ENCODE measurements at regions of chr9 and their contacts with region 1.

Region 1: GRCh38 chr9:126500684-126501382 is 112.9 kb upstream of the LMX1B start:
- DNase-seq: peak; percentile 95
- H3K4me3 ChIP-seq: peak overlapping the region in 1 of 2 experiments; percentile 54; a peak in 1 of 4 replicates
- H3K27ac ChIP-seq: no peak overlapping the region; a peak in 1 of 4 replicates
- H3K4me1 ChIP-seq: peaks cover 0 to 26% of the 10 kb centered on the region in 2 experiments; a peak in 1 of 4 replicates
- H3K27me3 ChIP-seq: no peaks in the 10 kb centered on the region
- CTCF ChIP-seq: peak; percentile 86
- EP300 ChIP-seq: no peak
- RAD21 ChIP-seq: peak; percentile 99

Region 2: DNA sequence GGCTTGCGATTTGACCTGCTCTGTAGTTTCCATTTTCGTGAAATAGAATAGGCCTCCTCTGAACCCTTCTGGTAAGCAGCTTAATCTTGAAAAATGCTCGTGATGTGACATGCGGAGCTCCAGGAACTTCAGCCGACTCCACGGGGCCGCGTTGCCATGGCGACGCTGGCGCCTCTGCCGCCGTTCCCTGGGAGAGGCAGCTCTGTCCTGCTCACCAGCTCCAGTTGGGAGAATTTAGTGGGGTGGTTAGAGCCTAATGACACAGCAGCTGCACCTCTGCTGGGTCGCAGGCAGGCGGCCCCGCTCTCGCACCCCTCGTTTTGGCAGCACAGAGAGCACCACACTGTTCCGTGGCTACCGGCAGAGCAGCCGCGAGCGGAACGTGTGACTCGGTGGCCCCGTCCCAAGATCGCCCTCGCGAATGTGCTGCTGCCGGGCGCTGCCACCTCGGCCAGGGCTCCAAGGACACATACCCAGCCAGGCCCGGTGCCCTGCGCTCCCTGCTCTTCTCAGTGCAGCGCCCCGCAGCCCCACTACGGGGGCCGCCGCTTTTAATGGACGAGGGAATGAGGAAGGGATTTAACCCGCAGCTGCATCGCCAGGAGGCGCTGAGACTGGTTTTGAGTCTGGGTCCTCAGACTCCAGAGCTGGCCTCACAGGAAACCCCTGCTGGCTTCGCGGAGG is 18.3 kb before region 1 on chr9:
- CTCF ChIA-PET with region 1: interaction called, 12 read pairs
- POLR2A ChIA-PET with region 1: no interaction called
- DNase-seq: no peak
- H3K4me3 ChIP-seq: no peak overlapping the region
- H3K27ac ChIP-seq: no peak overlapping the region
- H3K4me1 ChIP-seq: no peaks in the 10 kb centered on the region
- H3K27me3 ChIP-seq: no peaks in the 10 kb centered on the region
- CTCF ChIP-seq: no peak
- EP300 ChIP-seq: no peak
- RAD21 ChIP-seq: no peak

Region 3: DNA sequence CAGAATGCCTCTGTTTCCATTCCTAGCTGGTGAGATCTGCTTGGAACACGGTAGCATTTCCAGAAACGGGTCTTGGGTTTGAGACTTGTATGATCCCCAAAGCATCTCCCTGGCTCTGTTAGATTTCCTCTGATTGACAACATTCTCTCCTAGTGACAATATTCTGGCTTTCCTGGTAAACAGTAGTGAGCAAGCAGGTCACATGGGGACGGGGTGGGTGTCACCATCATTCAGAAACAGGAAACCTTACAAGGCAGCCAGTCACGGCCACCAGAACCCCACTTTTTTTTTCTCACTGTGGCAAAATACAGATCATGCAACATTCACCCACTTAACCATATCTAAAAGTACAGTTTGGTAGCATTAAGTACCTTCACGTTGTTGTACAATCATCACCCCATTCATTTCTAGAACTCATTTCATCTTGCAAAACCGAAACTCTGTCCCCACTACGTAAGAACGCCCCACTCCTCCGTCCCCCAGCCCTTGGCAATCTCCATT is 22.8 kb after region 1 on chr9:
- CTCF ChIA-PET with region 1: interaction called, 121 read pairs
- POLR2A ChIA-PET with region 1: no interaction called
- DNase-seq: peak; percentile 24
- H3K4me3 ChIP-seq: no peak overlapping the region
- H3K27ac ChIP-seq: peak overlapping the region in 1 of 2 experiments; percentile 55; a peak in 2 of 4 replicates
- H3K4me1 ChIP-seq: peaks cover 0 to 73% of the 10 kb centered on the region in 2 experiments; a peak in 2 of 4 replicates
- H3K27me3 ChIP-seq: peaks cover 19% of the 10 kb centered on the region; the same call in 1 of the 2 replicates
- CTCF ChIP-seq: no peak
- EP300 ChIP-seq: no peak
- RAD21 ChIP-seq: no peak

Region 4: GRCh38 chr9:126558051-126558665 is 57.3 kb after region 1 on chr9:
- CTCF ChIA-PET with region 1: interaction called, 739 read pairs
- POLR2A ChIA-PET with region 1: interaction called, 6 read pairs
- DNase-seq: peak; percentile 83
- H3K4me3 ChIP-seq: no peak overlapping the region; a peak in 1 of 4 replicates
- H3K27ac ChIP-seq: no peak overlapping the region
- H3K4me1 ChIP-seq: peaks cover 0 to 10% of the 10 kb centered on the region in 2 experiments; a peak in 1 of 4 replicates
- H3K27me3 ChIP-seq: peaks cover 27% of the 10 kb centered on the region
- CTCF ChIP-seq: peak; percentile 87
- EP300 ChIP-seq: no peak
- RAD21 ChIP-seq: peak; percentile 94

Region 5: DNA sequence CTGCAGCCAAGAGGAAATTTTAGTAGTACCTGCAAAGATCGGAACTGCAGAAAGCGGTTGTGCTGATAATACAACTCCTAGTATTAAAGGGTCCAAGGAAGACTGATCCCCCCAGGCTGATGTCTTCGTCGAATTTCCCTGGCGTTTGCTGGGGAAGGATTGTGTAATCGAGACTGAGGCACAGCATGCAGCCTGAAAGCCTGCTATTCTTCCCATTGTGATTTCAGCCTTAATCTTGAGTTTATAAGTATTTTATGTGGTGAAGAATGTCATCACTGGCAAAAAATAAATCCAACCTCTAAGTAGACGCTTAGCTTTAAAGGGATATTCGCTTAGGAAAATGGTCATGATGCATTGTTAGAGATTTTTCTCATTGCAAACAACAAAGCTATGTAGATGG is 91.6 kb after region 1 on chr9:
- CTCF ChIA-PET with region 1: interaction called, 13 read pairs
- POLR2A ChIA-PET with region 1: no interaction called
- DNase-seq: no peak
- H3K4me3 ChIP-seq: no peak overlapping the region
- H3K27ac ChIP-seq: no peak overlapping the region
- H3K4me1 ChIP-seq: peaks cover 0 to 7% of the 10 kb centered on the region in 2 experiments; a peak in 1 of 4 replicates
- H3K27me3 ChIP-seq: peaks cover 22% of the 10 kb centered on the region
- CTCF ChIP-seq: no peak
- EP300 ChIP-seq: no peak
- RAD21 ChIP-seq: no peak

Region 6: GRCh38 chr9:126611592-126612325 is 110.9 kb after region 1 on chr9:
- CTCF ChIA-PET with region 1: interaction called, 48 read pairs
- POLR2A ChIA-PET with region 1: no interaction called
- DNase-seq: peak; percentile 94
- H3K4me3 ChIP-seq: peak overlapping the region in 1 of 2 experiments; percentile 36; a peak in 1 of 4 replicates
- H3K27ac ChIP-seq: no peak overlapping the region
- H3K4me1 ChIP-seq: no peaks in the 10 kb centered on the region; a peak in 1 of 4 replicates
- H3K27me3 ChIP-seq: peaks cover 88% of the 10 kb centered on the region
- CTCF ChIP-seq: peak; percentile 70
- EP300 ChIP-seq: no peak
- RAD21 ChIP-seq: peak; percentile 68

Region 7: GRCh38 chr9:126646162-126646561 is 145.3 kb after region 1 on chr9:
- CTCF ChIA-PET with region 1: no interaction called
- POLR2A ChIA-PET with region 1: no interaction called
- DNase-seq: no peak
- H3K4me3 ChIP-seq: no peak overlapping the region
- H3K27ac ChIP-seq: no peak overlapping the region
- H3K4me1 ChIP-seq: no peaks in the 10 kb centered on the region; a peak in 1 of 4 replicates
- H3K27me3 ChIP-seq: peaks cover 98% of the 10 kb centered on the region
- CTCF ChIP-seq: no peak
- EP300 ChIP-seq: no peak
- RAD21 ChIP-seq: no peak

Region 8: GRCh38 chr9:126704873-126705766 is 204.3 kb after region 1 on chr9:
- CTCF ChIA-PET with region 1: interaction called, 23 read pairs
- POLR2A ChIA-PET with region 1: no interaction called
- DNase-seq: peak; percentile 93
- H3K4me3 ChIP-seq: peak overlapping the region in 1 of 2 experiments; percentile 34; a peak in 1 of 4 replicates
- H3K27ac ChIP-seq: no peak overlapping the region
- H3K4me1 ChIP-seq: peaks cover 0 to 5% of the 10 kb centered on the region in 2 experiments; a peak in 1 of 4 replicates
- H3K27me3 ChIP-seq: peaks cover 34% of the 10 kb centered on the region; the same call in 1 of the 2 replicates
- CTCF ChIP-seq: peak; percentile 82
- EP300 ChIP-seq: no peak
- RAD21 ChIP-seq: peak; percentile 78